ENCODE measurements at regions of chr6 and their contacts with region 1.

Region 1: DNA sequence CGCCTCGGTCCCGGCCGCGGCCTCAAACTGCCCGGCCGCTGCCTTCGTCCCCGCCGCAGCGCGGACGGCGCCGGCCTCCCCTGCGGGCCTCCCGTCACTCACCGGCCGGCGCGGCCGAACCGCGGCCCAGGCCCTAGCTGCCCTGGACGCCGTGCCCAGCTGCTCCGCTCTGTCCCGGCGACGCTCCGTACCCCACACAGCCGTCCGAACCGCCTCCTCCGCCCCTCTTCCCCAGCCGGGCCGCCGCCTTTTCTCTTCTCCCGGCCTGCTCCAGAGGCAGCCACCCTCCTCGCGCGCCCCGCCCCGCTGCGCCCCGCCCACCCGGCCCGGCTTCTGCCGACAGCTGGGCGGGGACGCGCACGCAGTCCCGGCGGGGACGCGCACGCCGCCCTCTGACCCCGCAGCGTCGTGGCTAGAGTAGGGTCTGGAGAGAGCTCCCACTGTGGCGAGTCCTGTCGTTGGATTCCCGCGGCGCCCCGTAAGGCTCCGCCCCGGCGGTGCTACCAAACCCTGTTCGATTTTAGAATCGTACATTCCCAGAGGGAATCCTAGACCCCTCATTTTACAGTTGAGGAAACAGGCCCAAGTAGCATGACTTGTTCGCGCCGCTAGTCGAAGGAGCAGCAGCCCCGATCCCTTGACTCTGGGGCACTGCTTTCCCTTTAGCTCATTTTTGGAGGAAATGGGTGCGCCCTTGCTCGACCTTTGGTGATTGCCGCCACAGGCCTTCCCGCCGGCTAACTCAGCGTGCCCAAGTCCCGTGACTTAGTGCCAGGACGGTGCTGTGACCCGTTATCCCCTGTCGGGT is at the start of gene FBXO30:
- DNase-seq: peak; percentile 64
- ATAC-seq: peak; percentile 76
- H3K4me3 ChIP-seq: peak within 1 kb of the TSS; percentile 97
- H3K27ac ChIP-seq: peak within 1 kb of the TSS; percentile 95
- H3K4me1 ChIP-seq: peaks cover 5% of the 10 kb centered on the region
- H3K27me3 ChIP-seq: no peaks in the 10 kb centered on the region
- CTCF ChIP-seq: no peak
- EP300 ChIP-seq: no peak
- POLR2A ChIP-seq: peak; percentile 93
- RAD21 ChIP-seq: no peak
- polyA plus RNA-seq, gene FBXO30: 1.7 to 1.9 TPM

Region 2: GRCh38 chr6:145656128-145656527 is 158.6 kb before region 1 on chr6:
- CTCF ChIA-PET with region 1: no interaction called
- POLR2A ChIA-PET with region 1: no interaction called
- RAD21 ChIA-PET with region 1: no interaction called
- SMC1A ChIA-PET with region 1: no interaction called
- in situ Hi-C with region 1: no loop called
- intact Hi-C with region 1: no loop called
- DNase-seq: no peak
- ATAC-seq: no peak; the same call in 2 of the 3 replicates
- H3K4me3 ChIP-seq: no peak overlapping the region
- H3K27ac ChIP-seq: no peak overlapping the region
- H3K4me1 ChIP-seq: no peaks in the 10 kb centered on the region
- H3K27me3 ChIP-seq: no peaks in the 10 kb centered on the region
- CTCF ChIP-seq: no peak
- EP300 ChIP-seq: no peak
- POLR2A ChIP-seq: no peak
- RAD21 ChIP-seq: no peak

Region 3: DNA sequence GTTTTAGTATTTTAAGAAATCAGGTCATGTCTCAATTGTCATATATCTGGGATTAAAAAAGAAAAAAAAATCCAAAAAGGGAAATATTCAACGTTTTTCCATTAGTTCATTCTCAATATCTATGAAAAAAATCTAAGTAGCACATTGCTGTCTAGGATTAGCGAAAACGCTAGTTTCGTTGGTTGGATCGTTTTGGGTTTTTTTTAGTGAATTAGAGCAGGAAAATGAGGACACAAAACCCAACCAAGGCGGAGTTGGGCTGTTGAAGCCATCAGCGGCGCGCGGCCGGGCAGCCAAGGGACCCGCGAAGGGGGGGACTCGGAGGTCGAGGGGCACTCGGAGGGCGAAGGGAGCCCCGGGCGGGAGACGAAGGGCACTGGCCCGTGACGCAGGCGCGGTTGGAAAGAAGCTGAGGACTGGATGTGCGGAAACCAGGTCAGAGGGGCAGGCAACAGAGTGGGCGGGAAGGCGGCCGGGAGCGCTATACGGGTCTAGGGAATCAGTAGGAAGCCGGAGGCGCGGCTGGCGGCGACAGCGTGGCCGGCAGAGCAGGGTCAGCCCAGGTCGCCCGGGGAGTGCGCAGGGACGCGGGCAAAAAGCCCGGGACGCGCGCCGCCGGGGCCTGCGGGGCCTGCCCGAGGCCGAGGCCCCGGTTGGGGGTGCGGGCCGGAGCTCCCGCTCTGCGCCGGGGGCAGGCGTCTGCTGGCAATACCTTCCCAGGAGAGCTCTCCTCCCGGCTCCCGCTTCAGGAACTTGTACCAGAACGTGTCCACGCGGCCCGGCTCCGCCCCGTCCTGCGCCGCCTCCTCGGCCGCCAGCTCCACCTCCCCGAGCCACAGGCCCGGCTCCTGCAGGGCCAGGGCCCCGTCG is 80.0 kb before region 1 on chr6:
- CTCF ChIA-PET with region 1: interaction called, 9 read pairs
- POLR2A ChIA-PET with region 1: interaction called, 13 read pairs
- RAD21 ChIA-PET with region 1: interaction called, 9 read pairs
- SMC1A ChIA-PET with region 1: interaction called, 17 read pairs
- in situ Hi-C with region 1: no loop called
- intact Hi-C with region 1: loop called (anchors 2 kb)
- DNase-seq: no peak
- ATAC-seq: peak; percentile 79
- H3K4me3 ChIP-seq: peak overlapping the region; percentile 95
- H3K27ac ChIP-seq: peak overlapping the region; percentile 83
- H3K4me1 ChIP-seq: no peaks in the 10 kb centered on the region; the same call in 1 of the 2 replicates
- H3K27me3 ChIP-seq: no peaks in the 10 kb centered on the region
- CTCF ChIP-seq: no peak
- EP300 ChIP-seq: 0 out of 4 replicates have a peak, but pooled peaks of 1 of the 2 experiments have one; percentile 20
- POLR2A ChIP-seq: peak; percentile 77
- RAD21 ChIP-seq: no peak

Region 4: DNA sequence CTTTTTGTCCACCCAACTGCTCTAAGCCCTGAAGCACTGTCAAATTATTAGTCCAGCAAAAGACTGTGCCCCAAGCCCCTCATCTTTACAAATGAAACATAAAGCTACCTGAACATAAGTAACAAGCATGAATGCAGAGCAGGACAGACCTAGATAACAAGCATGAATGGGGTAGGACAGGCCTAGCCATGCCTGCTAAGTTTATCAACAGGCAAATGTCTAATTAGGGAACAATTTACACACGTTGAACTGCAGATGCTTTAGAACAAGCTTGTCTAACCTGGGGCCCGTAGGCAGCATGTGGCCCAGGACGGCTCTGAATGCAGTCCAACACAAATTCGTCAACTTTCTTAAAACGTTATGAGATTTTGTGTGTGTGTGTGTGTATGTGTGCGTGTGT is 13.7 kb before region 1 on chr6:
- CTCF ChIA-PET with region 1: interaction called, 3 read pairs
- POLR2A ChIA-PET with region 1: interaction called, 6 read pairs
- RAD21 ChIA-PET with region 1: interaction called, 3 read pairs
- SMC1A ChIA-PET with region 1: interaction called, 20 read pairs
- in situ Hi-C with region 1: no loop called
- intact Hi-C with region 1: no loop called
- DNase-seq: no peak
- ATAC-seq: peak; percentile 75
- H3K4me3 ChIP-seq: no peak overlapping the region
- H3K27ac ChIP-seq: no peak overlapping the region
- H3K4me1 ChIP-seq: no peaks in the 10 kb centered on the region
- H3K27me3 ChIP-seq: no peaks in the 10 kb centered on the region
- CTCF ChIP-seq: no peak
- EP300 ChIP-seq: no peak
- POLR2A ChIP-seq: no peak
- RAD21 ChIP-seq: no peak

Region 5: GRCh38 chr6:145866456-145867396 is 52.0 kb after region 1 on chr6:
- CTCF ChIA-PET with region 1: interaction called, 7 read pairs
- POLR2A ChIA-PET with region 1: interaction called, 18 read pairs
- RAD21 ChIA-PET with region 1: interaction called, 16 read pairs
- SMC1A ChIA-PET with region 1: interaction called, 11 read pairs
- in situ Hi-C with region 1: no loop called
- intact Hi-C with region 1: loop called (anchors 2 kb)
- DNase-seq: no peak
- ATAC-seq: peak; percentile 57
- H3K4me3 ChIP-seq: peak overlapping the region; percentile 38
- H3K27ac ChIP-seq: peak overlapping the region; percentile 77
- H3K4me1 ChIP-seq: peaks cover 35% of the 10 kb centered on the region
- H3K27me3 ChIP-seq: no peaks in the 10 kb centered on the region
- CTCF ChIP-seq: no peak
- EP300 ChIP-seq: no peak
- POLR2A ChIP-seq: no peak
- RAD21 ChIP-seq: no peak

Region 6: GRCh38 chr6:145887969-145888368 is 73.3 kb after region 1 on chr6:
- CTCF ChIA-PET with region 1: no interaction called
- POLR2A ChIA-PET with region 1: interaction called, 4 read pairs
- RAD21 ChIA-PET with region 1: interaction called, 3 read pairs
- SMC1A ChIA-PET with region 1: interaction called, 8 read pairs
- in situ Hi-C with region 1: no loop called
- intact Hi-C with region 1: loop called (anchors 2 kb)
- DNase-seq: no peak
- ATAC-seq: peak; percentile 70
- H3K4me3 ChIP-seq: no peak overlapping the region
- H3K27ac ChIP-seq: no peak overlapping the region
- H3K4me1 ChIP-seq: no peaks in the 10 kb centered on the region
- H3K27me3 ChIP-seq: no peaks in the 10 kb centered on the region
- CTCF ChIP-seq: peak; percentile 56 to 65 (median 62); a peak in 5 of 6 replicates
- EP300 ChIP-seq: no peak
- POLR2A ChIP-seq: no peak
- RAD21 ChIP-seq: peak; percentile 77

Measured in GM12878 (cell line).